ENCODE measurements at regions of chr14 and their contacts with region 1.

Region 1: DNA sequence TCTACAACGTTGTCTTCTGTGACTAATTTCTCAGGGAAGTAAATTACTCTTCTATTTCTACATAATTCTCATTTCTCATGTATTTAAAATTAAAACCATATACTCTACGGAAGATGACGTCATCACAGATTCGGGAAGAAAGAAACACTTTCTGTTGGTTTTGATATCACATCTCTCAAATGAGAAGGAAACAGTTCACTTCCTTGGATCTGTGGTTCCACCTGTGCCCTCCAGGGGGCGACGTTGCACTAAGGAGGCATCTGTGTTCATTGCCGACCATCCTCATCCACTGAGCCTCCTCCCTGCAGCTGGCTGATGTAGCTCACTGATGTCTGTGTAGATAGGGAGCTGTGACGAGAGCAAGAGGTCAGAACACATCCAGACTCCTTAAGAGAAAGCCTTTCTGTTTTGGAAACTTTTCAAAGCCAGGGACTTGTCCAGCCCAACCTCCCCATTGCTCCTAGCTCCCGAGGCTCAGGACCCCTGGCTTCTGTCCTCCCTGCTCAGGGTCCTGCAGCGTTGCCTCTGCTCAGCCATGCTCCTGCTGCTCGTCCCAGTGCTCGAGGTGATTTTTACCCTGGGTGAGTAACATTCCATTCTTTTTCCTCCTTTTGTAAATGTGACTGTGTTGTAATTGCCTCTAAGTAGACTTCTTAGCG is 172.7 kb upstream of the OR4E1 start:
- DNase-seq: peak; percentile 48 to 71 (median 64)
- ATAC-seq: peak; percentile 90
- H3K4me3 ChIP-seq: peak overlapping the region; percentile 36
- H3K4me3 Mint-ChIP-seq: peak overlapping the region; percentile 75 to 95 (median 84)
- H3K27ac ChIP-seq: peak overlapping the region; percentile 52
- H3K27ac Mint-ChIP-seq: peak overlapping the region in 8 of 9 donors; percentile 41 to 91 (median 85)
- H3K4me1 ChIP-seq: no peaks in the 10 kb centered on the region
- H3K4me1 Mint-ChIP-seq: peaks cover 1 to 17% (median 10%) of the 10 kb centered on the region in 7 donors
- H3K27me3 ChIP-seq: no peaks in the 10 kb centered on the region
- H3K27me3 Mint-ChIP-seq: peaks cover 13 to 52% (median 24%) of the 10 kb centered on the region in 5 donors

Region 2: GRCh38 chr14:21734457-21735074 is 111.8 kb before region 1 on chr14:
- CTCF ChIA-PET with region 1: no interaction called
- POLR2A ChIA-PET with region 1: no interaction called
- intact Hi-C with region 1: no loop called
- DNase-seq: peak in 7 of 9 donors; percentile 44 to 71 (median 58)
- ATAC-seq: peak; percentile 73
- H3K4me3 ChIP-seq: no peak overlapping the region
- H3K4me3 Mint-ChIP-seq: peak overlapping the region in 9 of 10 donors; percentile 20 to 82 (median 58)
- H3K27ac ChIP-seq: no peak overlapping the region
- H3K27ac Mint-ChIP-seq: peak overlapping the region in 5 of 9 donors; percentile 6 to 85 (median 50)
- H3K4me1 ChIP-seq: no peaks in the 10 kb centered on the region
- H3K4me1 Mint-ChIP-seq: peaks cover 6 to 20% (median 14%) of the 10 kb centered on the region in 7 donors
- H3K27me3 ChIP-seq: no peaks in the 10 kb centered on the region
- H3K27me3 Mint-ChIP-seq: peaks cover 28 to 47% (median 42%) of the 10 kb centered on the region in 5 donors

Region 3: DNA sequence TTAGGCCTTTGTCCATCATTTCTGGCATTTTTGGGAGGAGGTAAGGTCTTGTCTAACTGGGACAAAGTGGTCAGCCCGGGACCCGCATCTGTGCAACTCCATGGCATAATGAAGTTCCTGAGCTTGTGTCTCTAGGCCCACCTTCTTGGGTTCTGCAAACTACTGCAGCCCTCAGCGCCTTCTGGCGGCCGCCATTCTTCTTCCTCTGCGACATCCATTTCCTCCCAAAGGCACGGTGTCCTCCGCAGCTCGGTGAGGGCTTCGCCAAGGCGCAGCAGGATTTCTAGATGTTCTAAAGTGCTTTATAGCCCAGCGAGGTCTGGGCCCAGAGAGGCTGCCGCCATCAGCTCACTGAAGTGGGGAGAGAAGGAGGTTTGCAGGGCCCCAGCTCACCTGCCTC is 38.4 kb before region 1 on chr14:
- CTCF ChIA-PET with region 1: no interaction called
- POLR2A ChIA-PET with region 1: no interaction called
- intact Hi-C with region 1: no loop called
- DNase-seq: no peak
- ATAC-seq: no peak
- H3K4me3 ChIP-seq: no peak overlapping the region
- H3K4me3 Mint-ChIP-seq: no peak overlapping the region
- H3K27ac ChIP-seq: no peak overlapping the region
- H3K27ac Mint-ChIP-seq: no peak overlapping the region
- H3K4me1 ChIP-seq: no peaks in the 10 kb centered on the region
- H3K4me1 Mint-ChIP-seq: no peaks in the 10 kb centered on the region
- H3K27me3 ChIP-seq: peaks cover 0 to 7% of the 10 kb centered on the region in 2 donors
- H3K27me3 Mint-ChIP-seq: peaks cover 22 to 27% (median 25%) of the 10 kb centered on the region in 5 donors

Region 4: GRCh38 chr14:21860172-21860571 is 13.8 kb after region 1 on chr14:
- CTCF ChIA-PET with region 1: interaction called, 20 read pairs
- POLR2A ChIA-PET with region 1: interaction called, 16 read pairs
- intact Hi-C with region 1: loop called in 1 of 2 experiments (anchors 2 kb)
- DNase-seq: peak in 7 of 9 donors; percentile 32 to 56 (median 47)
- ATAC-seq: peak; percentile 68
- H3K4me3 ChIP-seq: no peak overlapping the region
- H3K4me3 Mint-ChIP-seq: peak overlapping the region; percentile 40 to 89 (median 72)
- H3K27ac ChIP-seq: peak overlapping the region; percentile 7
- H3K27ac Mint-ChIP-seq: peak overlapping the region in 8 of 9 donors; percentile 7 to 77 (median 29)
- H3K4me1 ChIP-seq: no peaks in the 10 kb centered on the region
- H3K4me1 Mint-ChIP-seq: peaks cover 3 to 19% (median 11%) of the 10 kb centered on the region in 7 donors
- H3K27me3 ChIP-seq: no peaks in the 10 kb centered on the region
- H3K27me3 Mint-ChIP-seq: peaks cover 0 to 29% (median 4%) of the 10 kb centered on the region in 5 donors

Region 5: GRCh38 chr14:22386924-22387775 is 540.8 kb after region 1 on chr14:
- CTCF ChIA-PET with region 1: no interaction called
- POLR2A ChIA-PET with region 1: no interaction called
- intact Hi-C with region 1: no loop called
- DNase-seq: peak in 1 of 9 donors; percentile 33
- ATAC-seq: peak; percentile 33
- H3K4me3 ChIP-seq: no peak overlapping the region
- H3K4me3 Mint-ChIP-seq: no peak overlapping the region
- H3K27ac ChIP-seq: no peak overlapping the region
- H3K27ac Mint-ChIP-seq: no peak overlapping the region
- H3K4me1 ChIP-seq: no peaks in the 10 kb centered on the region
- H3K4me1 Mint-ChIP-seq: peaks cover 0 to 5% (median 0%) of the 10 kb centered on the region in 7 donors
- H3K27me3 ChIP-seq: no peaks in the 10 kb centered on the region
- H3K27me3 Mint-ChIP-seq: no peaks in the 10 kb centered on the region

Region 6: GRCh38 chr14:22497144-22497423 is 650.7 kb after region 1 on chr14:
- CTCF ChIA-PET with region 1: no interaction called
- POLR2A ChIA-PET with region 1: interaction called, 6 read pairs
- intact Hi-C with region 1: loop called (anchors 5 kb)
- DNase-seq: no peak
- ATAC-seq: no peak
- H3K4me3 ChIP-seq: peak overlapping the region; percentile 67
- H3K4me3 Mint-ChIP-seq: peak overlapping the region; percentile 79 to 96 (median 89)
- H3K27ac ChIP-seq: peak overlapping the region; percentile 90
- H3K27ac Mint-ChIP-seq: peak overlapping the region; percentile 90 to 97 (median 95)
- H3K4me1 ChIP-seq: peaks cover 3 to 9% of the 10 kb centered on the region in 2 donors
- H3K4me1 Mint-ChIP-seq: peaks cover 4 to 49% (median 21%) of the 10 kb centered on the region in 7 donors
- H3K27me3 ChIP-seq: no peaks in the 10 kb centered on the region
- H3K27me3 Mint-ChIP-seq: no peaks in the 10 kb centered on the region